CD4-positive, alpha-beta memory T cell (primary cell): ENCODE measurements at regions of chr2 and their contacts with region 1.

Region 1: DNA sequence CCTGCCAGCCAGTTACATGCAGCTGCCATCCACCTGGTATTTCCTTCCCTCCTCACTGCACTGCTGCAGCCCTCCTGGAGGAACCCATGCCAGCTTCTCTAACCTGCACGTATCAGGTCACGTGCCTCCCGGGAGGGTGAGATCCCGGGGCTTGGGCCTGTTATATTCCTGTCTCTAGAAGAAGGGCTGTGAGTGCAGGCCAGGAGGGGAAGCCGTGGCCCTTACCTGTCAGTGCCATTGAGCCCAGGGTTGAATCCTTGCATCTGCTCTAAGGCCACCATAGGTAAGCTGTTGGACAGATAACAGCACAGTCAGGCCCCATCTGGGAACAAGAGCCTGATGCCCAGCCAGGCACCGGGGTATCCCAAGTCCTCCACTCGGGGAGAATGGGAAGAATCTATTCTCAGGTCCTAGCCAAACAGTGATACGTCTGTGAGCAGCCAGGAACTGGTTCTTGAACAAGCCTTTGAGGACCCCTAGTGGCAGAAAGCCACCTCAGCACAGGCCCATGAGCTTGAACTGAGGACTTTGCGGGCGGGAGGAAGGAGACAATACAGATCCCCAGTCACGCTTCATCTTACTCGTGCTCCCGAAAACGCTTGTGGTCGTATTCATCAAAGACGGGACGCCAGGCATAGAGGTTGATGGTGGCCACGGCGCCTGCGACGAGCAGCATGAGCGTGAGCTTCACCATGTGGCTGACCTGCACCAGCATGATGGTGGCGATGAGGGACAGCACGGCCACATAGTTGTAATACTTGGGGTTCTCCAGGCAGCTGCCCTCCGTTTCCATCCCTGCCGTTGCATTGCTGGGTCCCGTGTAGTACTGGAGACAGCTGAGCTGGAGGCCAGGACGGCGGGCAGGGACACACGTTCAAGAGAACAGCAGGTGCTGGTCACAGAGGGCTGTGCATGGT is 34.4 kb downstream of the CENPO start:
- DNase-seq: peak; percentile 65 to 74 (median 70)
- H3K4me3 ChIP-seq: no peak overlapping the region
- H3K4me3 Mint-ChIP-seq: no peak overlapping the region
- H3K27ac ChIP-seq: no peak overlapping the region
- H3K27ac Mint-ChIP-seq: peak overlapping the region in 5 of 7 donors; percentile 3 to 75 (median 43)
- H3K4me1 ChIP-seq: peaks cover 20% of the 10 kb centered on the region
- H3K4me1 Mint-ChIP-seq: peaks cover 10 to 22% (median 19%) of the 10 kb centered on the region in 4 donors
- H3K27me3 ChIP-seq: no peaks in the 10 kb centered on the region
- H3K27me3 Mint-ChIP-seq: no peaks in the 10 kb centered on the region

Region 2: DNA sequence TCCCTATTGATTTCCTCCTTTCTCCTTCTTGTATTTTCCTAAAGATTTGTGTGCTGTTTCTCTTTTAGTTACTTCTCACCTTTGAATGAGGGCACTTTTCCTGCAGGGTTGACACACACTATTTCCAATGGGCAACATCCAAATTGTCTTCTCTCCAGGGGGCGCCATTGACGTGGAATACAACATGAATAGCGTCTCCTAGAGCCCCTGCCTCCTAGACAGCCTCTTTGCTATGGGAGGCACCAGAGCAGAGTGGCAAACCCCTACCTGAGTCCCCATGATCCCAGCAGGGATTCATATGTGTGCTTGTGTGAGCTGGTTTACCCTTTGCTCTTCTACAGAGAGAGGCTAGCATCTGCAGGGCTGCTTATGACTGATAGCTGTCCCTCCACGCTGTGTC is 405.9 kb before region 1 on chr2:
- CTCF ChIA-PET with region 1: interaction called, 71 read pairs
- POLR2A ChIA-PET with region 1: interaction called, 6 read pairs
- intact Hi-C with region 1: loop called (anchors 1 kb)
- DNase-seq: peak in 4 of 5 donors; percentile 29 to 34 (median 32)
- H3K4me3 ChIP-seq: no peak overlapping the region
- H3K4me3 Mint-ChIP-seq: no peak overlapping the region
- H3K27ac ChIP-seq: no peak overlapping the region
- H3K27ac Mint-ChIP-seq: peak overlapping the region in 1 of 7 donors; percentile 78
- H3K4me1 ChIP-seq: no peaks in the 10 kb centered on the region
- H3K4me1 Mint-ChIP-seq: peaks cover 0 to 3% (median 0%) of the 10 kb centered on the region in 4 donors
- H3K27me3 ChIP-seq: no peaks in the 10 kb centered on the region
- H3K27me3 Mint-ChIP-seq: no peaks in the 10 kb centered on the region

Region 3: DNA sequence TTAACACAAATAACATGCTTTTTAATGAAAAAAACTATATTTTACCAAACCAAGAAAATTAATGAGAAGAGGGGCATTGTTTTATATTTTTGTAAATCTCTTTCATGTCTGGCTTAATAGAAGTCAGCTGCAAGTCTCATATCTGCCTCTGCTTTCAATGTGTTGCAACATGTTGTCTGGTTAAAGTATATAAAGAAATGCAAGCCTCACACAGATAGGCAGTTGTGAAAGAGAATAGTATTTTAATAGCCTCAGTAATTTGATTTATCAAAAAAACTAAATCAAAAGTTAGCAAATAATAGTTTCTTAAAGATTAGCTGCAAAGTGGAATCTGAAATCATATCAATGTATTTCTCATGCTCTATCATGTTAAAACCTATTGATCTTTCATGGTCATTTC is 389.5 kb before region 1 on chr2:
- CTCF ChIA-PET with region 1: no interaction called
- POLR2A ChIA-PET with region 1: no interaction called
- intact Hi-C with region 1: no loop called
- DNase-seq: no peak
- H3K4me3 ChIP-seq: no peak overlapping the region
- H3K4me3 Mint-ChIP-seq: no peak overlapping the region
- H3K27ac ChIP-seq: no peak overlapping the region
- H3K27ac Mint-ChIP-seq: no peak overlapping the region
- H3K4me1 ChIP-seq: no peaks in the 10 kb centered on the region
- H3K4me1 Mint-ChIP-seq: no peaks in the 10 kb centered on the region
- H3K27me3 ChIP-seq: no peaks in the 10 kb centered on the region
- H3K27me3 Mint-ChIP-seq: no peaks in the 10 kb centered on the region

Region 4: GRCh38 chr2:24613154-24613814 is 214.3 kb before region 1 on chr2:
- CTCF ChIA-PET with region 1: interaction called, 18 read pairs
- POLR2A ChIA-PET with region 1: interaction called, 3 read pairs
- intact Hi-C with region 1: no loop called
- DNase-seq: peak in 4 of 5 donors; percentile 7 to 24 (median 20)
- H3K4me3 ChIP-seq: no peak overlapping the region
- H3K4me3 Mint-ChIP-seq: no peak overlapping the region
- H3K27ac ChIP-seq: no peak overlapping the region
- H3K27ac Mint-ChIP-seq: peak overlapping the region in 3 of 7 donors; percentile 65 to 88 (median 84)
- H3K4me1 ChIP-seq: peaks cover 9% of the 10 kb centered on the region
- H3K4me1 Mint-ChIP-seq: peaks cover 12 to 33% (median 21%) of the 10 kb centered on the region in 4 donors
- H3K27me3 ChIP-seq: no peaks in the 10 kb centered on the region
- H3K27me3 Mint-ChIP-seq: no peaks in the 10 kb centered on the region

Region 5: DNA sequence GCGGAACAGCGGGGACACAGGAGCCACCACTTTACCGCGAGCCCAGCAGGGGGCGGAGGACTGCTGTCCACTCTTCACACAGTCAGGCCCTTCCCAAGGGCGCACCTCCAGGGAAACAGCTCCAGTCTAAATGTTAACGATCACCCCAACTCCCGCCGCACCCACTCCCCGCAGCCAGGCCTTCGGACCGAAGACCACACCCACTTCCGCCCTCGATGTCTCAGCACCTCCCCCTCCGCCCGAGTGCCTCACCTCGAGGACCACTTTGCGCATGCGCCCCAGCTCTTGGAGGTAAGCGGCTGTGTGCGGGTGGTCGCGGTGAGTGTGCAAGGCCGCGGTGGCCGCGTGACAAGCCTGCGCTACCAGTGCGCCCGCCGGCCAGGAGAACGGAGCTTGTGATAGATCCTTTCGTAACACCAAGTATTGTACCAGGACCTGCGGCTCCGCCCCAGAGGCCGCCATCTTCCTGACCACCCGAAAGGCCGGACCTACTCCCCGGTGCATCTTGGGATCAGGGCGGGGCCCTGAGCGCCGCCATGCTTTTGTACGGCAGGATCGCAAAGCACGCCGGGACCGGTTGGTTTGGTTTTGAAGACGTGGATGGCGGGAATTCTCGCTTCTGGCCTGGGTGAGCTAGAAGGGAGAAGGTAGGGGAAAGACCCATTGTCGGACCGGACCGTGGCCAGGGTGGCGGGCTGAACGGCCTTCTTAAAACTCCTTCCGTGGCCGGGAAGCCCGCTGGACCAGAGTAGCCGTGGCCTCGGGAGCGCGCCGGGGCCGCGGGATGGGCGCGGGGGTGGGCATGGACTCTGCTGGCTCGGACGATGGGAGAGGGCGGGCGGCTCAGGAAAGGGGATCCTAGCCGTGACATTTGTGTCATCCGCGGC is 34.5 kb before region 1 on chr2 and contains the starts of genes CENPO and PTRHD1:
- CTCF ChIA-PET with region 1: interaction called, 8 read pairs
- POLR2A ChIA-PET with region 1: interaction called, 14 read pairs
- intact Hi-C with region 1: no loop called
- DNase-seq: peak; percentile 96 to 98 (median 97)
- H3K4me3 ChIP-seq: peak within 1 kb of the TSS; percentile 85 to 97
- H3K4me3 Mint-ChIP-seq: peak within 1 kb of the TSS; percentile 94 to 99 (median 96)
- H3K27ac ChIP-seq: peak within 1 kb of the TSS; percentile 93
- H3K27ac Mint-ChIP-seq: peak within 1 kb of the TSS; percentile 98 to 100 (median 99)
- H3K4me1 ChIP-seq: peaks cover 17% of the 10 kb centered on the region
- H3K4me1 Mint-ChIP-seq: peaks cover 10 to 25% (median 17%) of the 10 kb centered on the region in 4 donors
- H3K27me3 ChIP-seq: no peaks in the 10 kb centered on the region
- H3K27me3 Mint-ChIP-seq: no peaks in the 10 kb centered on the region
- total RNA-seq, gene CENPO: 4.6 to 6.1 TPM
- total RNA-seq, gene PTRHD1: 12.0 to 12.8 TPM

Region 6: GRCh38 chr2:25131567-25132298 is 304.2 kb after region 1 on chr2:
- CTCF ChIA-PET with region 1: interaction called, 10 read pairs
- POLR2A ChIA-PET with region 1: no interaction called
- intact Hi-C with region 1: loop called (anchors 5 kb)
- DNase-seq: no peak
- H3K4me3 ChIP-seq: no peak overlapping the region
- H3K4me3 Mint-ChIP-seq: peak overlapping the region; percentile 12 to 81 (median 66)
- H3K27ac ChIP-seq: no peak overlapping the region
- H3K27ac Mint-ChIP-seq: peak overlapping the region in 1 of 7 donors; percentile 38
- H3K4me1 ChIP-seq: no peaks in the 10 kb centered on the region
- H3K4me1 Mint-ChIP-seq: peaks cover 3 to 16% (median 9%) of the 10 kb centered on the region in 4 donors
- H3K27me3 ChIP-seq: peaks cover 37% of the 10 kb centered on the region
- H3K27me3 Mint-ChIP-seq: peaks cover 29 to 44% of the 10 kb centered on the region in 2 donors